Mammary epithelial cell (primary cell): ENCODE measurements at regions of chr6 and their contacts with region 1.

Region 1: DNA sequence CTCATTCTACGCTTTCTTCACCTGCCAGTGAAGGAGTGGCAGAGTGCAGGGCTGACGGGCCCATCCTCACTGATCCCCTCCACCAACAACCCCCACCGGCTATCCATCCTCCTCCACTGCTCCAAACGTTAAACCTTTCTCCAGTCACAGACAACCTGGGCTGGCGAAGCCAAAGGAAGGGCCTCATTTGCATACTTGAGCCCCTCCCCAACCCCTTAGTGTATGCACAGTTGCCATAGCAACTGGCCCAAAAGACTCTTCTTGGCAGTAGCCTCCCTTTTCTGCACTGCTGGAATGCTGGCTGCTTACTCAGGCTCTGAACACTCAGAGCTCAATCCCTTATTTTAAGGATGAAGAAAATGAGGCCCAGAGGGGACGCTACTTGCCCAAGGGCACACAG is 130.3 kb downstream of the GRM4 start:
- DNase-seq: no peak
- H3K4me3 ChIP-seq: no peak overlapping the region
- H3K27ac ChIP-seq: no peak overlapping the region
- H3K4me1 ChIP-seq: no peaks in the 10 kb centered on the region
- H3K27me3 ChIP-seq: no peaks in the 10 kb centered on the region
- CTCF ChIP-seq: no peak

Region 2: DNA sequence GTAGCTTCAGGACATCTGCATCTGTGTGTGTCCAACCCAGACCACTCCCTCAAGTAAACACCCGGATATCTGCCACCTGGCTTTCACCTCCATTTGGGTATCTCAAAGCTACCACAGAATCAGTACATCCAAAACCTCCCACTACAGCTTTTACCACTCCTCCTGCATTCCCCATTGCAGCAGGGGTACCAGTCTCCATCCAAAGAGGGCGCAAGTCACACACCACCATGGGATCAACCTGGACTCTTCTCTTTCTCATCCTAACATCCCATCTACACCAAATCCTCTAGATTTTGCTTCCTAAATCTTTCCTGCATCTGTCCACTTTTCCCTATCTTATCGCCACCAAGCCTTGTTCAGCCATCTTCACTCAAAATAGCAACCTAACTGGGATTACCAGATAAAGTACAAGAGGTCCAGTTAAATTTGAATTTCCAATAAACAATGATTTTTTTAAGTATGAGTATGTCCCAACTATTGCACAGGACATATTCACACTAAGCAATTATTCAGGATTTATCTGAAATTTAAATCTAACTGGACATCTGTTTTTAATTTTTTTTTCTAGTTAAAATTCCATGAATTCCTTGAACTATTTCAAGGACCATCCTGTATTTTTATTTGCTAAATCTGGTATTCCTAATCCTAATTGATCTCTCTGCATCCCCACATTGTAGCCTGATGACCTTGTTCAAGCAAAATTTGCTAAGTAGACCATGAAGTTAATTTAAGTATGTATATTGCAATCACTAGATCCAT is 47.4 kb before region 1 on chr6:
- CTCF ChIA-PET with region 1: no interaction called
- dilution Hi-C with region 1: loop called (anchors 5 kb)
- in situ Hi-C with region 1: no loop called
- intact Hi-C with region 1: no loop called
- DNase-seq: no peak
- H3K4me3 ChIP-seq: no peak overlapping the region
- H3K27ac ChIP-seq: no peak overlapping the region
- H3K4me1 ChIP-seq: no peaks in the 10 kb centered on the region
- H3K27me3 ChIP-seq: peaks cover 2% of the 10 kb centered on the region
- CTCF ChIP-seq: peak in 1 of 2 donors; percentile 33

Region 3: GRCh38 chr6:34004706-34005105 is 10.9 kb before region 1 on chr6:
- CTCF ChIA-PET with region 1: no interaction called
- dilution Hi-C with region 1: no loop called
- in situ Hi-C with region 1: no loop called
- intact Hi-C with region 1: no loop called
- DNase-seq: no peak
- H3K4me3 ChIP-seq: no peak overlapping the region
- H3K27ac ChIP-seq: no peak overlapping the region
- H3K4me1 ChIP-seq: no peaks in the 10 kb centered on the region
- H3K27me3 ChIP-seq: no peaks in the 10 kb centered on the region
- CTCF ChIP-seq: no peak

Region 4: DNA sequence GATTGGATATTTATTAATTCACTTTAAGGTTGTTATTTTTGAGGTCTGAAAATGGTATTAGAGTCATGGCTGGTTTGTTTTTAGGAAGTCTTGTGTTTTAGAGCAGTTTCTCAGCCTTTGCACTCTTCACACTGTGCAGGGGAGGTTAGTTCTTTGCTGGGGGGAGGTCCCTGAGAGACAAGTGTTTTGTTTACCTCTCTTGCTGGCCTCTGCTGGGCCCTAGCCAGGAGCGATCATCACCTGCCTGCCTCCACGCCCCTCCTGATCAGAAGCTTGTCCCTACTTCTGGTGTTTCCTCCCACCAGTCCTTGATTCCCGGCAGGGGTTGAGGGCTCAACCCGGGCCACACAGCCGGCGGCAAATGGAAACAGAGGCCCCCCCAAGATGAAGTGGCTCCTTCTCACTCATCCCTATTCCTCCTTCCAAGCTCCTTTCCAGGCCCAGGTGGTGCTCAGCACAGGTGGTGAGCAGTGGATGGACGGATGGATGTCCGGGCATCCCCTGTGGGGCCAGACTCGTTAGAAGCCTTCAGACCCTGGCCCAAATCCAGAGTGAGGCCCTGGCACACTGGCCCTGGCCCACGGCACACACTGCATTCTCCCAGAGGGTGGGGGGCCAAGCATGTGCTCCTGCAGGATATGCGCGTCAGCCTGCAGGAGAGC is 79.0 kb after region 1 on chr6:
- CTCF ChIA-PET with region 1: no interaction called
- dilution Hi-C with region 1: loop called (anchors 5 kb)
- in situ Hi-C with region 1: no loop called
- intact Hi-C with region 1: no loop called
- DNase-seq: no peak
- H3K4me3 ChIP-seq: no peak overlapping the region
- H3K27ac ChIP-seq: no peak overlapping the region
- H3K4me1 ChIP-seq: no peaks in the 10 kb centered on the region
- H3K27me3 ChIP-seq: no peaks in the 10 kb centered on the region
- CTCF ChIP-seq: no peak